MCF 10A (cell line): ENCODE measurements at regions of chr1 and their contacts with region 1.

Region 1: GRCh38 chr1:110312188-110313121 is 26.7 kb upstream of the RBM15 start:
- DNase-seq: peak; percentile 67
- H3K4me3 Mint-ChIP-seq: no peak overlapping the region
- H3K27ac Mint-ChIP-seq: no peak overlapping the region
- H3K4me1 Mint-ChIP-seq: peaks cover 6% of the 10 kb centered on the region
- H3K27me3 Mint-ChIP-seq: no peaks in the 10 kb centered on the region
- CTCF ChIP-seq: peak; percentile 91

Region 2: GRCh38 chr1:110203021-110203661 is 109.3 kb before region 1 on chr1:
- CTCF ChIA-PET with region 1: interaction called, 1,128 read pairs
- POLR2A ChIA-PET with region 1: interaction called, 33 read pairs
- intact Hi-C with region 1: loop called (anchors 1 kb)
- DNase-seq: peak; percentile 71
- H3K4me3 Mint-ChIP-seq: no peak overlapping the region
- H3K27ac Mint-ChIP-seq: no peak overlapping the region
- H3K4me1 Mint-ChIP-seq: no peaks in the 10 kb centered on the region
- H3K27me3 Mint-ChIP-seq: no peaks in the 10 kb centered on the region
- CTCF ChIP-seq: peak; percentile 67

Region 3: DNA sequence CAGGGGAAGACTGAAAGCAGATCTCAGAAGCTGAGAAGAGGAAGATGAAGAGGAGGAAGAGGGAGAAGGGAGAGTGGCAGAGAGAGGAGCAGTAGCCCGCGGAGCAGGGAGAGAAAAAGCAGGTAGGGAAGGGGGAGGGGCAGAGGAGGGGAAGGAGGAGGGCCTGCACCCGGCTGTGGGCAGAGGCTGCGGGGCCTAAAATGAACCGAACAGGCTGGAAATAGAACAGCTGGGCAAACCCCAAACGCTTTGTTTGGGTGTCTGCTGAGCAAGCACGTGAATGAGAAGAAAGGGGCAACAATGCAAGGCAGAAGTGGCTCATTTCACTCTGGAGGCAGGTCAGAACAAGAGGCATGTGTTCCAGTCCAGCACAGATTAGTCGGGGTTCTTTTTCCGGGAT is 68.9 kb before region 1 on chr1:
- CTCF ChIA-PET with region 1: interaction called, 10 read pairs
- POLR2A ChIA-PET with region 1: no interaction called
- intact Hi-C with region 1: no loop called
- DNase-seq: no peak
- H3K4me3 Mint-ChIP-seq: no peak overlapping the region
- H3K27ac Mint-ChIP-seq: peak overlapping the region; percentile 28
- H3K4me1 Mint-ChIP-seq: no peaks in the 10 kb centered on the region
- H3K27me3 Mint-ChIP-seq: no peaks in the 10 kb centered on the region
- CTCF ChIP-seq: no peak

Region 4: DNA sequence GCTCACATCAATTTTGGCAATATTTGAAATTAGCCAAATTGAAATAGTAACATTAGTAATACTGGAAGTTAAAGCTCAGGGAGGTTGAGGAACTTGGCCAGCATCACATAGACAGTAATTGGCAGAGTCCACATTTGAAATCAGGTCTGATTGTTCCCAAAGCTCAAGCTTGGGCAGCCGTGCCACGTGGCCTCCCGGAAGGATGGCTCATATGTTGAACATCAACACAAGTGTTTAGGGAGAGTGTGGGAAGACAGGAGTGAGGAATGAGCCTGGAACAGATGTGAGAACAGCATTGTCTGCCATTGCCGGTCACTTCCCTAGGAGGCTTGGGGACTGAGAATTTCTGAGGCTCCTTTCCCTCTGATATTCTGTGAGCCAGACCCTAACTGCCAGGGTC is 13.5 kb before region 1 on chr1:
- CTCF ChIA-PET with region 1: interaction called, 33 read pairs
- POLR2A ChIA-PET with region 1: no interaction called
- intact Hi-C with region 1: no loop called
- DNase-seq: no peak
- H3K4me3 Mint-ChIP-seq: no peak overlapping the region
- H3K27ac Mint-ChIP-seq: no peak overlapping the region
- H3K4me1 Mint-ChIP-seq: no peaks in the 10 kb centered on the region
- H3K27me3 Mint-ChIP-seq: peaks cover 13% of the 10 kb centered on the region
- CTCF ChIP-seq: no peak

Region 5: GRCh38 chr1:110407260-110408210 is 95.1 kb after region 1 on chr1 and contains the start of gene LAMTOR5:
- CTCF ChIA-PET with region 1: interaction called, 14 read pairs
- POLR2A ChIA-PET with region 1: no interaction called
- intact Hi-C with region 1: no loop called
- DNase-seq: peak; percentile 90
- H3K4me3 Mint-ChIP-seq: peak within 1 kb of the TSS; percentile 100
- H3K27ac Mint-ChIP-seq: peak within 1 kb of the TSS; percentile 100
- H3K4me1 Mint-ChIP-seq: peaks cover 9% of the 10 kb centered on the region
- H3K27me3 Mint-ChIP-seq: no peaks in the 10 kb centered on the region
- CTCF ChIP-seq: no peak
- total RNA-seq, gene LAMTOR5: 111 and 127 TPM in 2 replicates

Region 6: DNA sequence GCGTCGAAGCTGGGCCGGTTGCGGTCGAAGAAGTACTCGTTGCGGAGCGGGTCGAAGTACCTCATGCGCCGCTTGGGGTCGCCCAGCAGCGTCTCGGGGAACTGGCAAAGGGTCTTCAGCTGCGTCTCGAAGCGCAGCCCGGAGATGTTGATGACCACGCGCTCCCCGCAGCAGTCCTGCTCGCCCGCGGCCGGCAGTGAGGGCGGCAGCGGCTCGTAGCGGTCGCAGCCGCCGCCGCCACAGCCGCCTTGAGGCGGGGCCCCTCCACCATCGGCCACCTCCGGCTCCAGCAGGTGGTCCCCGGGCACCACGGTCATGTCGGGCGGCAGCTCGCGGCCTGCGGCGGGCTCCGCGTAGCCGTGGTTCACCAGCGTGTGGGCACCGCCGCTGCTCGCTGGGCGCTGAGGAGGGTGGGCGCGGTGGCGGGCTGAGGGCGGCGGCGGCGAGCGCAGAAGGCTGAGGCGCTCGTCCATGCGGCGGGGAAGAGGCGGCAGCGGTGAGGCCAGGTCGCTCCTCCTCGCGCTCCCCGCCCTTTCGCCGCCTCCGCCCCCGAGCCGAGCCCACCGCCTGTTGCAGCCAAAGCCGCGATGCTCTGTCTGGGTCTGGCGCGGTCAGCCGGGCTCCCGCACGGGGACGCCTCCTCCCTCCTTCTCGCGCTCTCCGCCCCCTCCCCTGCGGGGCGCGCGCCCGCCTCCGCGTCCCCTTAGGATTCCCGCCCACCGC is 362.0 kb after region 1 on chr1 and contains the start of gene KCNA3:
- CTCF ChIA-PET with region 1: no interaction called
- POLR2A ChIA-PET with region 1: no interaction called
- intact Hi-C with region 1: no loop called
- DNase-seq: no peak
- H3K4me3 Mint-ChIP-seq: no peak within 1 kb of the TSS
- H3K27ac Mint-ChIP-seq: no peak within 1 kb of the TSS
- H3K4me1 Mint-ChIP-seq: no peaks in the 10 kb centered on the region
- H3K27me3 Mint-ChIP-seq: peaks cover 13% of the 10 kb centered on the region
- CTCF ChIP-seq: no peak
- total RNA-seq, gene KCNA3: not detected in 2 replicates